B cell (primary cell): ENCODE measurements at regions of chr5 and their contacts with region 1.

Region 1: DNA sequence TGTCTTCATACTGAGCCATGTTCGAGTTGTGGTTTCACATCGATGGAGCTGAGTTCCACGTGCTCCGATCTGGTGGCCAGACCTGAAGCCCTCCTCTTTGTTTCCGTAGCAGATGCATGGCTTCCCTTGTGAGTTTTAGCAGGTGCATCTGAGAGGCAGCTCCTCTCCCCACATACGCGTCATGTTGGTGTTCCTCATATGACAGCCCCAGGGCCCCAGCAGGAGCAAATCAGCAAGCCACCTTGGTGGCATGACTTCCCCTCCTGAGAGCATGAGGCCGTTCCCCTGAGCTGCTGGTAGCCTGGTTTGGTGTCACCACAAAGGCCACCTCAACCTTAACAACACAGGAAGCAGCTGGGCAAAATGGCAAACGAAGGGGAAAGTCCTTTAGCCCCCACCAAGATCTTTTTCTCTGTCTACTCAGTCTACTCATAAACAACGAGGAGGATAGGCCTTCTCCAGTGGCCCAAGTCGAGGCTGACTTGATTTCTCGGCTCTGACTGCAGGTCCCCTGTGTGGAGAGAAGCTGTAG is 5.9 kb downstream of the CYFIP2 start:
- DNase-seq: peak; percentile 98
- ATAC-seq: peak; percentile 89
- H3K4me3 ChIP-seq: peak overlapping the region in 3 of 5 experiments; percentile 4 to 39 (median 32)
- H3K4me3 Mint-ChIP-seq: peak overlapping the region; percentile 82
- H3K27ac ChIP-seq: peak overlapping the region; percentile 99
- H3K27ac Mint-ChIP-seq: peak overlapping the region; percentile 99
- H3K4me1 ChIP-seq: peaks cover 81 to 92% of the 10 kb centered on the region in 2 donors
- H3K4me1 Mint-ChIP-seq: peaks cover 90% of the 10 kb centered on the region
- H3K27me3 ChIP-seq: no peaks in the 10 kb centered on the region
- H3K27me3 Mint-ChIP-seq: no peaks in the 10 kb centered on the region
- CTCF ChIP-seq: no peak

Region 2: DNA sequence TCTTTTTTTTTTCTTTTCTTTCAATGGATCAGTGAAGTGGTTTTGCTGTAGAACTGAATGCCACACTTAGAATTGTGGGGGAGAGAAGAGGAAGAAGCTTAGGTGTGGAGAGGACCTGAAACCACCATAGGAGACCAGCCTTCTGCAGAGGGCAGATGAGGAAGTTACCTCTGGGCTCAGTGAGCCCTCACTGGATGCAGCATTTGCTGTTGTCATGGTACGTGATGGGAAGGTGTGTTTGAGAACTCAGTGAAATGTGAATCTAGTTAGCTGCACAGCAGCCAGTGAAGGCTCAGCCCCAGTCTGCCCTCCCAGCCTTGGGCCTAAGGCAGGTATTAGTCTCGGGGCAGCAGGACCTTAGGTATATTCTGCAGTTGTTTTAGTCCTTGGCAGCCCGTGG is 11.6 kb after region 1 on chr5:
- CTCF ChIA-PET with region 1: interaction called, 16 read pairs
- POLR2A ChIA-PET with region 1: interaction called, 38 read pairs
- intact Hi-C with region 1: loop called (anchors 1 kb)
- DNase-seq: peak; percentile 91
- ATAC-seq: peak; percentile 100
- H3K4me3 ChIP-seq: peak overlapping the region in 1 of 5 experiments; percentile 16
- H3K4me3 Mint-ChIP-seq: peak overlapping the region; percentile 50
- H3K27ac ChIP-seq: peak overlapping the region; percentile 63 to 75
- H3K27ac Mint-ChIP-seq: peak overlapping the region; percentile 84
- H3K4me1 ChIP-seq: peaks cover 47 to 56% of the 10 kb centered on the region in 2 donors
- H3K4me1 Mint-ChIP-seq: peaks cover 70% of the 10 kb centered on the region
- H3K27me3 ChIP-seq: no peaks in the 10 kb centered on the region
- H3K27me3 Mint-ChIP-seq: no peaks in the 10 kb centered on the region
- CTCF ChIP-seq: no peak

Region 3: GRCh38 chr5:157312492-157312891 is 40.7 kb after region 1 on chr5:
- CTCF ChIA-PET with region 1: interaction called, 495 read pairs
- POLR2A ChIA-PET with region 1: interaction called, 11 read pairs
- intact Hi-C with region 1: no loop called
- DNase-seq: peak; percentile 79
- ATAC-seq: peak; percentile 84
- H3K4me3 ChIP-seq: no peak overlapping the region
- H3K4me3 Mint-ChIP-seq: no peak overlapping the region
- H3K27ac ChIP-seq: peak overlapping the region; percentile 13 to 53
- H3K27ac Mint-ChIP-seq: peak overlapping the region; percentile 70
- H3K4me1 ChIP-seq: peaks cover 5 to 26% of the 10 kb centered on the region in 2 donors
- H3K4me1 Mint-ChIP-seq: peaks cover 30% of the 10 kb centered on the region
- H3K27me3 ChIP-seq: no peaks in the 10 kb centered on the region
- H3K27me3 Mint-ChIP-seq: no peaks in the 10 kb centered on the region
- CTCF ChIP-seq: peak; percentile 84

Region 4: DNA sequence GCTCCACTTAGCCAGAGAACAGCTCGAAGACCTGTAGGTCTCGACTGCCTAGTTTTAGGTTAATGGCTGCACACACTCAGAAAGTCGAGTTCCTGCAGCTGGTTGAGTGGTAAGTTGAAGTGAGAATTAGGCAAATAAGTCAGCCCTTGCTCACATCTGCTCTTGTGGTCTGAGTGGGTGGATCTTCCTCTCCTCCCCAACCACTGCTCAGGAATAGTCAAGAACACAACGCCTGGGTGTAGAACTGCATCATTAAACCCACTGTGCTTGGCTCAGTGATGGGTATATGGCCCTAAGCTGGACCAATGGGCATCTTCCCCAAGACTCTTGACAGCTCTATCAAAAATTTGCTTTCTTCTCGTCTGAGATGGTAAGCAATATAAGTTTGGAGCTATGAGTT is 324.7 kb after region 1 on chr5:
- CTCF ChIA-PET with region 1: no interaction called
- POLR2A ChIA-PET with region 1: interaction called, 3 read pairs
- intact Hi-C with region 1: loop called (anchors 5 kb)
- DNase-seq: peak; percentile 87
- ATAC-seq: peak; percentile 73
- H3K4me3 ChIP-seq: peak overlapping the region in 1 of 5 experiments; percentile 31
- H3K4me3 Mint-ChIP-seq: peak overlapping the region; percentile 45
- H3K27ac ChIP-seq: peak overlapping the region; percentile 92 to 97
- H3K27ac Mint-ChIP-seq: peak overlapping the region; percentile 85
- H3K4me1 ChIP-seq: peaks cover 92 to 95% of the 10 kb centered on the region in 2 donors
- H3K4me1 Mint-ChIP-seq: peaks cover 93% of the 10 kb centered on the region
- H3K27me3 ChIP-seq: no peaks in the 10 kb centered on the region
- H3K27me3 Mint-ChIP-seq: no peaks in the 10 kb centered on the region
- CTCF ChIP-seq: no peak